Naive thymus-derived CD4-positive, alpha-beta T cell (primary cell): ENCODE measurements at regions of chr2 and their contacts with region 1.

Region 1: GRCh38 chr2:222498308-222498707 is 74.0 kb downstream of the SGPP2 start:
- DNase-seq: no peak
- ATAC-seq: no peak
- H3K4me3 ChIP-seq: no peak overlapping the region
- H3K4me3 Mint-ChIP-seq: no peak overlapping the region
- H3K27ac ChIP-seq: no peak overlapping the region
- H3K27ac Mint-ChIP-seq: no peak overlapping the region
- H3K4me1 ChIP-seq: no peaks in the 10 kb centered on the region
- H3K4me1 Mint-ChIP-seq: no peaks in the 10 kb centered on the region
- H3K27me3 ChIP-seq: no peaks in the 10 kb centered on the region
- H3K27me3 Mint-ChIP-seq: peaks cover 0 to 17% (median under 1%) of the 10 kb centered on the region in 5 donors

Region 2: GRCh38 chr2:222483513-222484039 is 14.7 kb before region 1 on chr2:
- CTCF ChIA-PET with region 1: no interaction called
- POLR2A ChIA-PET with region 1: no interaction called
- intact Hi-C with region 1: loop called in 1 of 2 experiments (anchors 1 kb)
- DNase-seq: no peak
- ATAC-seq: no peak
- H3K4me3 ChIP-seq: no peak overlapping the region
- H3K4me3 Mint-ChIP-seq: no peak overlapping the region
- H3K27ac ChIP-seq: no peak overlapping the region
- H3K27ac Mint-ChIP-seq: no peak overlapping the region
- H3K4me1 ChIP-seq: no peaks in the 10 kb centered on the region
- H3K4me1 Mint-ChIP-seq: peaks cover 0 to 3% (median 0%) of the 10 kb centered on the region in 7 donors
- H3K27me3 ChIP-seq: no peaks in the 10 kb centered on the region
- H3K27me3 Mint-ChIP-seq: peaks cover 3 to 58% (median 12%) of the 10 kb centered on the region in 5 donors

Region 3: DNA sequence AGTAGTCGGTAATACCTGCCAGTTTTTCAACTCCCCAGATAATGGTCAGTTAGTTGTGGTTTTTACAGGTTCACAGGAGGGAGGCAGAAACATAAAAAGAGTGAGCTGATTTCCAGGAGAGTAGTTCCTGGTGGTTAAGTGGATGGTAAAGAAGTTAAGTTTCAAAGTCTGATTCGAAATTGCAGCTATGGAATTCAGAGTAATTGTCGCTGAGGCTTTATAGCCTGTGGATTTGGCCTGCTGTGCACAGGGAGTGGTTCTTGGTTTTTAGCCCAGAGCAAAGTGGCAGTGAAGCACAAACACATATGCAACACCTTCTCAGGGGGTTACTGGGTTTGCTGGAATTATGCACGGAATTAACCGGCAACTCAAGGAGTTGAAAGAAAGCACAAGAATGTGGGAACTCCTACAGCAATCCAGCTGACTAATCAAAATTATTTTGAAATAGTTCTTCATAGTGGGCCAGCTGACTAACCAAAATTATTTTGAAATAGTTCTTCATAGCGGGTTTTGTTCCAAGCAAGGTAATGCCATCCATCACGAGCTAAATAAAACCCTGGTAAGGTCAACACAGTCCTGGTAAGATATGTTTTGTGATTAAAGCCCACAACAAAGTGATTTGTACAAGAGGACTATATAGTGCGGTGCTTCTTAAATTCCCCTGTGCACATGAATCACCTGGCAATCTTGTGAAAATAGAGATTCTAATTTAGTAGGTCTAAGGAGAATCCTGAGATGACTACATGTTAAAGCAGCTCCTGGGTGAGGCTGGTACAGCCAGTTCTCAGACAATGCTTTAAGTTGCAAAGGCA is 20.5 kb after region 1 on chr2:
- CTCF ChIA-PET with region 1: no interaction called
- POLR2A ChIA-PET with region 1: no interaction called
- intact Hi-C with region 1: no loop called
- DNase-seq: no peak
- ATAC-seq: no peak
- H3K4me3 ChIP-seq: no peak overlapping the region
- H3K4me3 Mint-ChIP-seq: no peak overlapping the region
- H3K27ac ChIP-seq: no peak overlapping the region
- H3K27ac Mint-ChIP-seq: no peak overlapping the region
- H3K4me1 ChIP-seq: no peaks in the 10 kb centered on the region
- H3K4me1 Mint-ChIP-seq: no peaks in the 10 kb centered on the region
- H3K27me3 ChIP-seq: no peaks in the 10 kb centered on the region
- H3K27me3 Mint-ChIP-seq: peaks cover 3 to 28% (median 11%) of the 10 kb centered on the region in 5 donors